CD4-positive, alpha-beta memory T cell (primary cell): ENCODE measurements at regions of chr1 and their contacts with region 1.

Region 1: DNA sequence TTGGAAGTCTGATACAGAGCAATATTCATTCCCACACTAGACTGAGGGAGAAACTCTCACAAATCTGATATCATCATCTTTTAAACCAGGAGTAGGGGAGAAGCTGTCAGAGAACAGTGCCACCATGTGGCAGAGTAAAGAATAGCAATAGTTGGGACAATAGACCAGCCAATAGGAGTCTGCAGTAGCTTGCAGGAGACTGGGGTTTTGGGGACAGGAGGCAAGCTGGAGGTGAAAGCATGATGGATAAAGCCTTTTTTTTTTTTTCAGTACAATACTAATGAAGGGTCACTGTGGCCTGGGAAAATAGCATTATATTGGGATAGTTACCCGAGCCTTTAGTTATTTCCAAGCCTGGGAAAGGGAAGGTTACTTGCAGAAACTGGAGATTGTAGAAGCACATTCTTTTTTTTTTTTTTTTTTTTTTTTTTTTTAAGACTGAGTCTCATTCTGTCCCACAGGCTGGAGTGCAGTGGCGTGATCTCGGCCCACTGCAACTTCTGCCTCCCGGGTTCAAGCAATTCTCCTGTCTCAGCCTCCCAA is 120.7 kb downstream of the S1PR1 start:
- DNase-seq: peak; percentile 78 to 87 (median 83)
- H3K4me3 ChIP-seq: no peak overlapping the region
- H3K4me3 Mint-ChIP-seq: peak overlapping the region in 4 of 8 donors; percentile 4 to 65 (median 55)
- H3K27ac ChIP-seq: no peak overlapping the region
- H3K27ac Mint-ChIP-seq: peak overlapping the region in 5 of 7 donors; percentile 67 to 96 (median 88)
- H3K4me1 ChIP-seq: peaks cover 13% of the 10 kb centered on the region
- H3K4me1 Mint-ChIP-seq: peaks cover 7 to 10% (median 10%) of the 10 kb centered on the region in 4 donors
- H3K27me3 ChIP-seq: no peaks in the 10 kb centered on the region
- H3K27me3 Mint-ChIP-seq: no peaks in the 10 kb centered on the region

Region 2: GRCh38 chr1:100895540-100896483 is 461.7 kb before region 1 on chr1 and contains the start of gene SLC30A7:
- CTCF ChIA-PET with region 1: interaction called, 5 read pairs
- POLR2A ChIA-PET with region 1: no interaction called
- intact Hi-C with region 1: loop called (anchors 1 kb)
- DNase-seq: peak; percentile 93 to 98 (median 95)
- H3K4me3 ChIP-seq: peak within 1 kb of the TSS; percentile 96 to 98
- H3K4me3 Mint-ChIP-seq: peak within 1 kb of the TSS; percentile 94 to 100 (median 100)
- H3K27ac ChIP-seq: peak within 1 kb of the TSS; percentile 100
- H3K27ac Mint-ChIP-seq: peak within 1 kb of the TSS; percentile 99 to 100 (median 100)
- H3K4me1 ChIP-seq: peaks cover 44% of the 10 kb centered on the region
- H3K4me1 Mint-ChIP-seq: peaks cover 28 to 60% (median 39%) of the 10 kb centered on the region in 4 donors
- H3K27me3 ChIP-seq: no peaks in the 10 kb centered on the region
- H3K27me3 Mint-ChIP-seq: no peaks in the 10 kb centered on the region
- total RNA-seq, gene SLC30A7: 54.9 TPM

Region 3: GRCh38 chr1:101112051-101112780 is 245.3 kb before region 1 on chr1:
- CTCF ChIA-PET with region 1: interaction called, 3 read pairs
- POLR2A ChIA-PET with region 1: no interaction called
- intact Hi-C with region 1: loop called (anchors 1 kb)
- DNase-seq: peak; percentile 84 to 91 (median 88)
- H3K4me3 ChIP-seq: peak overlapping the region in 1 of 2 donors; percentile 3
- H3K4me3 Mint-ChIP-seq: peak overlapping the region; percentile 52 to 87 (median 70)
- H3K27ac ChIP-seq: peak overlapping the region; percentile 60
- H3K27ac Mint-ChIP-seq: peak overlapping the region; percentile 91 to 100 (median 98)
- H3K4me1 ChIP-seq: peaks cover 42% of the 10 kb centered on the region
- H3K4me1 Mint-ChIP-seq: peaks cover 39 to 51% (median 47%) of the 10 kb centered on the region in 4 donors
- H3K27me3 ChIP-seq: no peaks in the 10 kb centered on the region
- H3K27me3 Mint-ChIP-seq: no peaks in the 10 kb centered on the region

Region 4: GRCh38 chr1:101293461-101294051 is 64.0 kb before region 1 on chr1:
- CTCF ChIA-PET with region 1: interaction called, 40 read pairs
- POLR2A ChIA-PET with region 1: interaction called, 7 read pairs
- intact Hi-C with region 1: loop called (anchors 1 kb)
- DNase-seq: peak in 2 of 5 donors; percentile 32 to 80
- H3K4me3 ChIP-seq: no peak overlapping the region
- H3K4me3 Mint-ChIP-seq: peak overlapping the region in 6 of 8 donors; percentile 19 to 75 (median 56)
- H3K27ac ChIP-seq: no peak overlapping the region
- H3K27ac Mint-ChIP-seq: peak overlapping the region; percentile 26 to 91 (median 84)
- H3K4me1 ChIP-seq: peaks cover 77% of the 10 kb centered on the region
- H3K4me1 Mint-ChIP-seq: peaks cover 47 to 88% (median 65%) of the 10 kb centered on the region in 4 donors
- H3K27me3 ChIP-seq: no peaks in the 10 kb centered on the region
- H3K27me3 Mint-ChIP-seq: no peaks in the 10 kb centered on the region

Region 5: GRCh38 chr1:101317590-101317989 is 39.9 kb before region 1 on chr1:
- CTCF ChIA-PET with region 1: interaction called, 262 read pairs
- POLR2A ChIA-PET with region 1: interaction called, 75 read pairs
- intact Hi-C with region 1: no loop called
- DNase-seq: no peak
- H3K4me3 ChIP-seq: no peak overlapping the region
- H3K4me3 Mint-ChIP-seq: no peak overlapping the region
- H3K27ac ChIP-seq: no peak overlapping the region
- H3K27ac Mint-ChIP-seq: no peak overlapping the region
- H3K4me1 ChIP-seq: peaks cover 6% of the 10 kb centered on the region
- H3K4me1 Mint-ChIP-seq: peaks cover 8 to 21% (median 12%) of the 10 kb centered on the region in 4 donors
- H3K27me3 ChIP-seq: no peaks in the 10 kb centered on the region
- H3K27me3 Mint-ChIP-seq: no peaks in the 10 kb centered on the region

Region 6: DNA sequence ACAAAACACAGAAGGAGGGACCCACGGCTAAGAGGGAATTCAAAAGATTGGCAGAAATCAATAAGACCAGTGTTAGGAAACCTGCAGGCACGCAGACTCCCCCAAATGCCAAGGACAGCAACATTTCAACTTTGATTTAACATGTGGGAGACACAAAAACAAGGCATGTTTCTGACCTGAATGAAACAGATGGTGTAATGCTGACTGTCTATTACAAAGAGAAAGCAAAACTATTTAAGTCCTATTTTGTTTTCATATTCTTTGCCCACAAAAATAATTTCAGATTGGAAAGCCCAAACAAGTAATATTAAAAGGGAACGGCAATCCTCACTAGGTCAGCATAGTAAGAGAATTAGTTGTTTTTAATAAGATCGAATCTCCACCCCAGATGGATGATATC is 12.8 kb before region 1 on chr1:
- CTCF ChIA-PET with region 1: interaction called, 23 read pairs
- POLR2A ChIA-PET with region 1: interaction called, 6 read pairs
- intact Hi-C with region 1: no loop called
- DNase-seq: no peak
- H3K4me3 ChIP-seq: no peak overlapping the region
- H3K4me3 Mint-ChIP-seq: peak overlapping the region in 6 of 8 donors; percentile 17 to 42 (median 30)
- H3K27ac ChIP-seq: no peak overlapping the region
- H3K27ac Mint-ChIP-seq: peak overlapping the region in 1 of 7 donors; percentile 68
- H3K4me1 ChIP-seq: peaks cover 24% of the 10 kb centered on the region
- H3K4me1 Mint-ChIP-seq: peaks cover 31 to 44% (median 36%) of the 10 kb centered on the region in 4 donors
- H3K27me3 ChIP-seq: no peaks in the 10 kb centered on the region
- H3K27me3 Mint-ChIP-seq: no peaks in the 10 kb centered on the region